Naive thymus-derived CD4-positive, alpha-beta T cell (primary cell): ENCODE measurements at regions of chr1 and their contacts with region 1.

Region 1: DNA sequence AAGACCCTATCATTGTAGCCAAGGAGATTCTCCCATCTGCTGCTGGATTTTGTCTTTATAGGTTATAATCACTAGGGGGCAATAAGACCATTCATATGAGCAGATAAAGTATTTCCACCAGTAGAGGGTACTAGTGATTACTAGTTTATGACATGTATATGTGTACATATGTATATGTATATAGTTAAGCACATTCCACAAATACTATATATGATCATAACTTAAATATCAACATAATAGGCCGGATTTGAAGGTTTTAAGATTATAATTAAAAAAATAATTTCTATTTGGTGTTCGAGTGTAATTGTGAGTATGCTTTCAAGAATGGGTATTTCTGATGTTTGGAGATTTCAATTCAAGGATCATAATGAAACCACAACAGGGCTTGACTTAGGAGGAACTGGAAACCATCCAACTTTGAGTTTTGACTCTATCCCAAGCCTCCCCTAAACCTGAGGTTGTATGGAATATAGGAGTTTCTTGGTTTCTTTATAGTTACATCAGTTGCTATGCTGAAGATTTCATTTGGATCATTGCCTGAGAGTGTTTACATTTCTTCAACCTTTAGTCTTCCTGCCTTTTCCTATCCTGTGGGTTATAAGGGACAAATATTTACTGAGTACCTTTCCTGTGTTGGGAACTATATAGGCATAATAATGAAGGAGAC is 16.9 kb downstream of the TCEANC2 start:
- DNase-seq: peak in 7 of 9 donors; percentile 11 to 66 (median 54)
- ATAC-seq: peak; percentile 100
- H3K4me3 ChIP-seq: no peak overlapping the region
- H3K4me3 Mint-ChIP-seq: no peak overlapping the region
- H3K27ac ChIP-seq: no peak overlapping the region
- H3K27ac Mint-ChIP-seq: peak overlapping the region in 1 of 9 donors; percentile 16
- H3K4me1 ChIP-seq: no peaks in the 10 kb centered on the region
- H3K4me1 Mint-ChIP-seq: peaks cover 0 to 6% (median 0%) of the 10 kb centered on the region in 7 donors
- H3K27me3 ChIP-seq: no peaks in the 10 kb centered on the region
- H3K27me3 Mint-ChIP-seq: no peaks in the 10 kb centered on the region

Region 2: DNA sequence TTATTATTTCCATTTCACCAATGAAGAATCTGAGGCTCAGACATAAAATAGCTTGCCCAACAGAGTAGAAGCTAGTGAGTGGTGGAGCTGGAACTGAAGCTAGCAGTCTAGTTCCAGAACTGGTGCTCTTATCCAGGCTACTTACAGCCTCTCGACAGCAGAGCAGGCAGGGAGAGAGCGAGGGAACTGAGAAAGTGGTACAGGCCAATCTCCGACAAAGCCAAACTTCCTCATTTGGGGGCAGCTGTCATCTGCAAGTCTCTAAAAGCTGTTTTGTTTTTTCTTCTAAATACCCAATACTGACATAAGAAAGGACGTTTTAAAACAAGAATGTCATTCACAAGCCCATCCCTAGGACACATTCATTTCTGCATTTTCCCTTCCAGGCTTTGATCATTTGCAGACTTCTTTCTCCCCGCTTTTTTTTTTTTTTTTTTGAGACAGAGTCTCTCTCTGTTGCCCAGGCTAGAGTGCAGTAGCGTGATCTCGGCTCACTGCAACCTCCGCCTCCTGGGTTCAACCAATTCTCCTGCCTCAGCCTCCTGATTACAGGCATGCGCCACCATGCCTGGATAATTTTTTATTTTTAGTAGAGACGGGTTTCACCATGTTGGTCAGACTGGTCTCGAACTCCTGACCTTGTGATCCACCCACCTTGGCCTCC is 200.7 kb before region 1 on chr1:
- CTCF ChIA-PET with region 1: no interaction called
- POLR2A ChIA-PET with region 1: no interaction called
- intact Hi-C with region 1: no loop called
- DNase-seq: no peak
- ATAC-seq: no peak
- H3K4me3 ChIP-seq: no peak overlapping the region
- H3K4me3 Mint-ChIP-seq: no peak overlapping the region
- H3K27ac ChIP-seq: no peak overlapping the region
- H3K27ac Mint-ChIP-seq: no peak overlapping the region
- H3K4me1 ChIP-seq: no peaks in the 10 kb centered on the region
- H3K4me1 Mint-ChIP-seq: peaks cover 0 to 7% (median 0%) of the 10 kb centered on the region in 7 donors
- H3K27me3 ChIP-seq: no peaks in the 10 kb centered on the region
- H3K27me3 Mint-ChIP-seq: no peaks in the 10 kb centered on the region

Region 3: GRCh38 chr1:53982034-53982762 is 88.1 kb before region 1 on chr1:
- CTCF ChIA-PET with region 1: no interaction called
- POLR2A ChIA-PET with region 1: no interaction called
- intact Hi-C with region 1: no loop called
- DNase-seq: no peak
- ATAC-seq: no peak
- H3K4me3 ChIP-seq: no peak overlapping the region
- H3K4me3 Mint-ChIP-seq: peak overlapping the region in 6 of 10 donors; percentile 25 to 46 (median 40)
- H3K27ac ChIP-seq: no peak overlapping the region
- H3K27ac Mint-ChIP-seq: peak overlapping the region in 4 of 9 donors; percentile 16 to 82 (median 60)
- H3K4me1 ChIP-seq: peaks cover 0 to 14% of the 10 kb centered on the region in 2 donors
- H3K4me1 Mint-ChIP-seq: peaks cover 2 to 41% (median 34%) of the 10 kb centered on the region in 7 donors
- H3K27me3 ChIP-seq: no peaks in the 10 kb centered on the region
- H3K27me3 Mint-ChIP-seq: no peaks in the 10 kb centered on the region

Region 4: DNA sequence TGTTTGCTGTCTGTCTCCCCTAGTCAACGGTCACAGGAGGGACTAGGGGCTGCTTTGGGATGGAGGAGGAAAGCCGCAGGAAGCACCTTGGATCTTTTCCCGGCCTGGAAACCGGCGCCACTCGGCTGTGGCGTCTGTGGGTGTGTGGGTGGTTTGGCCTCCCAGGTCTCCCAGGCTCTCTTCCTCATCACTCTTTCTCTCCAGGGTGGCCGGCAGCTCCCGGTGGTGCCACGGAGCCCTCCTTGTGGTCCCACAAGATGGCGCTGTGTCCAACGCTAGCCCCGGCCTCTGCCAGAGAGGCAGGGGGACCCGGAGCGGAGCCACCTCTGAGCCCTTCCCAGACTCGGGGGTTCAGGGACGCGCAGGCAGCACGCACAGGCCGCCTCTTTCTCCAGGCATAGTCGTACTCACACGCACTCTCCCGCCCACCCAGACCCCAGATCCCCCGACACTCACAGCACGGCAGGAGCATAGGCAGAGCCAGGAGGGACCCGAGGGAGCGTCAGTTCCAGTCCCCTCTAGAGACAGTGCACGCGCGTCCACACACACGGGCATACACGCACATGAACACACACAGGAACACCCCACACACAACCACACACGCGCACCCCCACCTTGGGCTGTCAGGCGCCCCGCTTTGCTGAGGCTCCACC is 51.3 kb after region 1 on chr1:
- CTCF ChIA-PET with region 1: no interaction called
- POLR2A ChIA-PET with region 1: interaction called, 9 read pairs
- intact Hi-C with region 1: loop called in 1 of 2 experiments (anchors 5 kb)
- DNase-seq: peak; percentile 42 to 75 (median 60)
- ATAC-seq: peak; percentile 81
- H3K4me3 ChIP-seq: no peak overlapping the region
- H3K4me3 Mint-ChIP-seq: peak overlapping the region in 8 of 10 donors; percentile 39 to 74 (median 68)
- H3K27ac ChIP-seq: no peak overlapping the region
- H3K27ac Mint-ChIP-seq: peak overlapping the region in 2 of 9 donors; percentile 14 to 67
- H3K4me1 ChIP-seq: no peaks in the 10 kb centered on the region
- H3K4me1 Mint-ChIP-seq: peaks cover 0 to 13% (median 6%) of the 10 kb centered on the region in 7 donors
- H3K27me3 ChIP-seq: no peaks in the 10 kb centered on the region
- H3K27me3 Mint-ChIP-seq: peaks cover 0 to 7% (median 0%) of the 10 kb centered on the region in 5 donors

Region 5: DNA sequence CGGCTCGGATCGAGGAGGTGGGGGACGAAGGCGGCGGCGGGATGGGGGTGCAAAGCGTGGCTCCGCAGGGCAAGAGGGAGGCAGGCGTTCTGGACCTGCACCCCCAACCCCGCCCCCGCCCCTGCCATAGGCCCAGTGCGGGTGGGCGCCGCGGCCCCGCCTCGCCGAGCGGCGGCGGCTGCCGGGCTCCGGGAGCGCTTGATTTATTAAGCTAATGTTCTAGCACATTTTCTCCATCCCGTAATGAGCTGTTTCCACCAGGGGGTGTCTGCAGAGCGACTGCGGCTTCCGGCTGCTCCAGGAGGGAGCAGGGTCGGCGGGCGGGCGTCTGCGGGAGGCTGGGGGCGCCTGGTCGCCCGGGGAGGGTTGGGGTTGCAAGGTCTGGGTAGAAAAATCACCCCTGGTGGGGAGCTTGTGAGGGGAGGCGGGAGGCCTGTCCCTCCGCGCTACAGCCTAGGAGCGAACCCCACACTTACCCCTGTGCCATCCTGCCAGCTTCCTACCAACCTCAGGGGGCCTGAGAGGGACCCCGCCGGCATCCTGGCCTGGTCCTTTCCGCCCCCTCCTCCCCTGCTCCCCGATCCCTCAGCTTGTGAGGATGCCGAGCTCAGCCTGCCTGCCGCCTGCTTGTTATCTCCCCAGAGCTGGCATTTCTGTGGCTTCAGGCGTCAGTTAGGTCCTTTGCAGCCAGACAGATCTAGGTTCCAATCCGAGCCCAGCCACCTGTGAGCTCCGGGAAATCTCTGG is 429.2 kb after region 1 on chr1:
- CTCF ChIA-PET with region 1: interaction called, 4 read pairs
- POLR2A ChIA-PET with region 1: no interaction called
- intact Hi-C with region 1: loop called in 1 of 2 experiments (anchors 5 kb)
- DNase-seq: peak in 6 of 9 donors; percentile 44 to 58 (median 50)
- ATAC-seq: peak; percentile 75
- H3K4me3 ChIP-seq: peak overlapping the region; percentile 48
- H3K4me3 Mint-ChIP-seq: peak overlapping the region; percentile 72 to 85 (median 78)
- H3K27ac ChIP-seq: no peak overlapping the region
- H3K27ac Mint-ChIP-seq: no peak overlapping the region
- H3K4me1 ChIP-seq: peaks cover 0 to 9% of the 10 kb centered on the region in 2 donors
- H3K4me1 Mint-ChIP-seq: peaks cover 4 to 11% (median 8%) of the 10 kb centered on the region in 7 donors
- H3K27me3 ChIP-seq: peaks cover 0 to 7% of the 10 kb centered on the region in 2 donors
- H3K27me3 Mint-ChIP-seq: peaks cover 27 to 67% (median 34%) of the 10 kb centered on the region in 5 donors

Region 6: GRCh38 chr1:54671985-54672608 is 601.8 kb after region 1 on chr1:
- CTCF ChIA-PET with region 1: no interaction called
- POLR2A ChIA-PET with region 1: no interaction called
- intact Hi-C with region 1: loop called in 1 of 2 experiments (anchors 1 kb)
- DNase-seq: peak; percentile 18 to 69 (median 53)
- ATAC-seq: peak; percentile 86
- H3K4me3 ChIP-seq: no peak overlapping the region
- H3K4me3 Mint-ChIP-seq: no peak overlapping the region
- H3K27ac ChIP-seq: no peak overlapping the region
- H3K27ac Mint-ChIP-seq: no peak overlapping the region
- H3K4me1 ChIP-seq: no peaks in the 10 kb centered on the region
- H3K4me1 Mint-ChIP-seq: peaks cover 0 to 6% (median 0%) of the 10 kb centered on the region in 7 donors
- H3K27me3 ChIP-seq: no peaks in the 10 kb centered on the region
- H3K27me3 Mint-ChIP-seq: peaks cover 0 to 10% (median 0%) of the 10 kb centered on the region in 5 donors

Region 7: GRCh38 chr1:54715493-54716298 is 645.4 kb after region 1 on chr1 and contains the start of gene TTC4:
- CTCF ChIA-PET with region 1: no interaction called
- POLR2A ChIA-PET with region 1: no interaction called
- intact Hi-C with region 1: loop called in 1 of 2 experiments (anchors 5 kb)
- DNase-seq: peak; percentile 71 to 92 (median 85)
- ATAC-seq: peak; percentile 99
- H3K4me3 ChIP-seq: peak within 1 kb of the TSS; percentile 86
- H3K4me3 Mint-ChIP-seq: peak within 1 kb of the TSS; percentile 81 to 96 (median 88)
- H3K27ac ChIP-seq: peak within 1 kb of the TSS; percentile 84
- H3K27ac Mint-ChIP-seq: peak within 1 kb of the TSS; percentile 58 to 94 (median 91)
- H3K4me1 ChIP-seq: peaks cover 14 to 15% of the 10 kb centered on the region in 2 donors
- H3K4me1 Mint-ChIP-seq: peaks cover 15 to 42% (median 34%) of the 10 kb centered on the region in 7 donors
- H3K27me3 ChIP-seq: no peaks in the 10 kb centered on the region
- H3K27me3 Mint-ChIP-seq: no peaks in the 10 kb centered on the region
- total RNA-seq, gene TTC4: 11.6 to 25.8 (median 21.4) TPM

Region 8: GRCh38 chr1:54800899-54801759 is 730.8 kb after region 1 on chr1 and contains the start of gene TTC22:
- CTCF ChIA-PET with region 1: interaction called, 3 read pairs
- POLR2A ChIA-PET with region 1: no interaction called
- intact Hi-C with region 1: loop called (anchors 1 kb)
- DNase-seq: peak; percentile 49 to 71 (median 64)
- ATAC-seq: peak; percentile 91
- H3K4me3 ChIP-seq: peak within 1 kb of the TSS; percentile 94
- H3K4me3 Mint-ChIP-seq: peak within 1 kb of the TSS; percentile 90 to 99 (median 96)
- H3K27ac ChIP-seq: peak within 1 kb of the TSS; percentile 74
- H3K27ac Mint-ChIP-seq: peak within 1 kb of the TSS; percentile 82 to 97 (median 90)
- H3K4me1 ChIP-seq: peaks cover 38 to 44% of the 10 kb centered on the region in 2 donors
- H3K4me1 Mint-ChIP-seq: peaks cover 32 to 77% (median 56%) of the 10 kb centered on the region in 7 donors
- H3K27me3 ChIP-seq: no peaks in the 10 kb centered on the region
- H3K27me3 Mint-ChIP-seq: no peaks in the 10 kb centered on the region
- total RNA-seq, gene TTC22: 7.0 to 16.6 (median 9.8) TPM

Region 9: DNA sequence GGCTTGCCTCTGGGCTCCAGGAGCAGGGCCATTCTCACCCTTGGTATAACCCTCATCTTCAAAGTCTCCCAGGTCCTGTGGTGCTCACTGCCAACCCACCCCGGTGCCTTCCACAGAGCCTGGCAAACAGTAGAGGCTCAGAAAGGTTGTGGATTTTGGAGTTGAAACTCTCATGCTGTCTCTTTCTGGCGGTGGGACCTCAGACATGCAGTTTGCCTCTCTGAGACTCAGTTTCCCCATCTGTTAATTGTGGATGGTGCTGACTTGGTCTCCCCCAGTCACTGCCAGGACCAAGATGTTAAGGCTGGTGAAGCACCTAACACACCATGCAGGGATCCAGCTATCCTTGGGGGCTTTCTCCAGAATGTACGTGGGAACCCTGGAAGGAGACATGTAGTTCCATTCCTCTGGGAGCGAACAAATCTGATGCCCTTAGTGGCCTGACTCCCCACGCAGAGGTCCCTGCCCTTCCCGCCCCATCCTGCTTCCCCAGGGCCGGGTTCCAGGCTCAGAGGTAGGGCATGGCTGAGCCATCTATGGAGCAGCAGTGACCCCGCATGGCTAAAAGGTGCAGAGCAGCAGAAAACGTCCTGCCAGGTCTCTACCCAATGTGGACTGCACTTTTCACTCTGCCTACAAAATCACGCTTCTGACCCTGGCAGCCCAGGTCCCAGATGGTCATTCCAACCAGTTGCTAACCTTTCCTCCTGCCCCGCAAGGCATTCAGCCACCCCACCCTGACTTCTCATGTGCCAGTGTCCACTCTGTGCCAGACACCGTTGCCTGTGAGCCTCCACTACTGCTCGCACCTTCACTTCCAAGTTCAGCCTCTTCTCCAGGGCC is 740.0 kb after region 1 on chr1:
- CTCF ChIA-PET with region 1: interaction called, 3 read pairs
- POLR2A ChIA-PET with region 1: no interaction called
- intact Hi-C with region 1: loop called (anchors 1 kb)
- DNase-seq: peak; percentile 11 to 69 (median 53)
- ATAC-seq: peak; percentile 69
- H3K4me3 ChIP-seq: no peak overlapping the region
- H3K4me3 Mint-ChIP-seq: no peak overlapping the region
- H3K27ac ChIP-seq: no peak overlapping the region
- H3K27ac Mint-ChIP-seq: peak overlapping the region in 1 of 9 donors; percentile 55
- H3K4me1 ChIP-seq: peaks cover 0 to 11% of the 10 kb centered on the region in 2 donors
- H3K4me1 Mint-ChIP-seq: peaks cover 0 to 29% (median 7%) of the 10 kb centered on the region in 7 donors
- H3K27me3 ChIP-seq: no peaks in the 10 kb centered on the region
- H3K27me3 Mint-ChIP-seq: no peaks in the 10 kb centered on the region